ENCODE measurements at regions of chr1 and their contacts with region 1.

Region 1: GRCh38 chr1:7752512-7753417 is 18.3 kb upstream of the VAMP3 start:
- DNase-seq: no peak
- H3K4me3 ChIP-seq: peak overlapping the region in 3 of 4 donors; percentile 36 to 56 (median 37)
- H3K27ac ChIP-seq: peak overlapping the region in 2 of 4 donors; percentile 29 to 53
- H3K4me1 ChIP-seq: peaks cover 0 to 14% (median 3%) of the 10 kb centered on the region in 3 donors
- H3K27me3 ChIP-seq: no peaks in the 10 kb centered on the region
- CTCF ChIP-seq: peak; percentile 62 to 88 (median 84)
- POLR2A ChIP-seq: no peak

Region 2: DNA sequence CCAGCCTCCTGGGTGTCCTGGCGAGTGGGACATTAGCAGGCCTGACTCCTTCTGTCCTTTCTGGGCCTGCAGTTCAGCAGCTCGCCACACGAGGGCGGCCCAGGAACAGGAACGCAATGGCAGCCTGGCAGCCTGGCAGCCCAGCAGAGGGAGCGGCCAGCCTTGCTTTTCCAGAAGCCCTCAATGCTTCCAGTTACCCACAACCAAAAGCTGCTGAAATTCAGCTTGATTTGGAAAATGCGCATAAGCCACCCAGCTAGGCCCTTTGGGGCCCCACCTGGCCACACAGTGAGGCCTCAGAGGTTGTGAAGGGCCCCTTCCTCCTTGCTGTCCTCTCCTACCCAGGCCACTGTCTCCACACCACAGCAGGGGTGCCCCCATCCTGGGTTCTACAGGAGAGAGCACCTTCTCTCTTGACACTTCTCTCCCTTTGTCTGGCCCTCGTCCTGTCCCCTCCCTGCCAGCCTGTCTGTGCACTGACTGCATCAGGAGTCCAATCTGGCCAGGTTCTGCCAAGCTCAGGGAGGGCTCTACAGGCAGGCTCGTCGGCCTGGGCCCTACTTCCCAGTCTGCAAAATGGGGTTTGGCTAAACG is 85.0 kb before region 1 on chr1:
- intact Hi-C with region 1: loop called (anchors 2 kb)
- DNase-seq: no peak
- H3K4me3 ChIP-seq: no peak overlapping the region
- H3K27ac ChIP-seq: no peak overlapping the region
- H3K4me1 ChIP-seq: peaks cover 0 to 24% (median 9%) of the 10 kb centered on the region in 3 donors
- H3K27me3 ChIP-seq: peaks cover 0 to 21% (median 0%) of the 10 kb centered on the region in 4 donors
- CTCF ChIP-seq: peak; percentile 96 to 100 (median 100)
- POLR2A ChIP-seq: no peak

Region 3: GRCh38 chr1:7821282-7821681 is 68.5 kb after region 1 on chr1:
- intact Hi-C with region 1: no loop called
- DNase-seq: no peak
- H3K4me3 ChIP-seq: no peak overlapping the region
- H3K27ac ChIP-seq: no peak overlapping the region
- H3K4me1 ChIP-seq: no peaks in the 10 kb centered on the region
- H3K27me3 ChIP-seq: no peaks in the 10 kb centered on the region
- CTCF ChIP-seq: no peak
- POLR2A ChIP-seq: no peak

Region 4: GRCh38 chr1:8241417-8242014 is 488.8 kb after region 1 on chr1:
- intact Hi-C with region 1: no loop called
- DNase-seq: no peak
- H3K4me3 ChIP-seq: no peak overlapping the region
- H3K27ac ChIP-seq: no peak overlapping the region
- H3K4me1 ChIP-seq: peaks cover 3 to 19% (median 4%) of the 10 kb centered on the region in 3 donors
- H3K27me3 ChIP-seq: no peaks in the 10 kb centered on the region
- CTCF ChIP-seq: no peak
- POLR2A ChIP-seq: no peak